ENCODE measurements at regions of chr7 and their contacts with region 1.

Region 1: GRCh38 chr7:129494041-129494440 is 8.3 kb upstream of the SMKR1 start:
- DNase-seq: no peak
- H3K4me3 ChIP-seq: no peak overlapping the region
- H3K27ac ChIP-seq: no peak overlapping the region
- H3K4me1 ChIP-seq: no peaks in the 10 kb centered on the region
- H3K27me3 ChIP-seq: no peaks in the 10 kb centered on the region
- CTCF ChIP-seq: no peak
- POLR2A ChIP-seq: no peak

Region 2: DNA sequence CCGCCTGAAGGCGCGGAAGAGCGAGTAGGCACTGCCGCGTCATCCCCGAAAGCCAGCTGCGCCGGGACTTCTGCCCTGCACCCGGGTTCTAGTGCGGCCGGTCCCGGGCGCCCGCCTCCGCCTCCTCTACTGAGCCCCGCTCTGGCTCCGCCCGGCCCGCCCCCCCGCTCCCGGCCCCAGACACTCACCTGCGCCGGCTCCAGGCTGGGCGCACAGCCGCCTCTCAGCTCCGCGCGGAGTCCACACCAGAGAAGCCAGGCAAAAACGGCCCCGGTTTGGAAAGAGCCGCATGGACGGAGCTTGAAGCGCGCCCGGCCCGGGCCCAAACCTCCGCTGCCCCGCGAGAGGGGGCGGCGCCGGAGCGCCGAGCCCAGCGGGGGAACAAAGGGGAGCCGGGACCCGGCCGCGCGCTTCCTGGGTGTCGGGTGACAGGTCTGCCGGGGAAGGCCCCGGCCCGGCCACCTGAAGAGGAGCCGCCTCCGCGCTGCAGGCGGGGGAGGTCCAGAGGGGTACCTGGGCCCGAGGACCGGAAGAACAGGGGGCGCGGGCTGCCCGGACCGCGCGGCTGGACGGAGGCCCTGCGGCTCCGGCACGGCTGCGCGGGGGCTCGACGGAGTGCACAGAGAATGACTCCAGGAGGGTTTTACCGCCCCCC is 285.7 kb after region 1 on chr7:
- intact Hi-C with region 1: loop called (anchors 10 kb)
- DNase-seq: no peak
- H3K4me3 ChIP-seq: peak overlapping the region; percentile 47 to 51
- H3K27ac ChIP-seq: peak overlapping the region; percentile 6
- H3K4me1 ChIP-seq: peaks cover 63% of the 10 kb centered on the region
- H3K27me3 ChIP-seq: peaks cover 39% of the 10 kb centered on the region
- CTCF ChIP-seq: no peak
- POLR2A ChIP-seq: no peak

Measured in vagina (tissue), 2 donors.